Body of pancreas (tissue), 4 donors: ENCODE measurements at regions of chr1 and their contacts with region 1.

Region 1: DNA sequence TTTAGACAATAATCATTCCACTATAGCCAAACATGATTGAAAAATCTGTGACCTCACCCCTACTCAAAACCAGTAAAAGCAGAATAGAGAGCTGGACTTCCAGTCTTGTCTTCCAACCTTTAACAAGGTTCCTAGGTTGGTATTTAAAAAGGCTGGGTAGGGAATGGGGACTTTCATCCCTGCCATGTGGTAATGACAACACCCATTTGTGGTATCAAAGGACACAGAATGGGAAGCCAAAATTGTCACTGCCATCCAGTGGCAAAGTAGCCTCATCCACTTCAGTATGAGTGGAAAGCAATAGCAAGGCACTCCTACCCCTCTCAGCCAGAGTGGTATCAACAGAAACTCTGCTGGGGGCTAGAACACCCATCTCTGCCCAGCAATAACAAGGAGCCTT is 33.9 kb downstream of the UCHL5 start:
- DNase-seq: no peak
- ATAC-seq: no peak
- H3K4me3 ChIP-seq: no peak overlapping the region
- H3K27ac ChIP-seq: no peak overlapping the region
- H3K4me1 ChIP-seq: peaks cover 2% of the 10 kb centered on the region
- H3K27me3 ChIP-seq: no peaks in the 10 kb centered on the region
- CTCF ChIP-seq: no peak
- POLR2A ChIP-seq: no peak

Region 2: DNA sequence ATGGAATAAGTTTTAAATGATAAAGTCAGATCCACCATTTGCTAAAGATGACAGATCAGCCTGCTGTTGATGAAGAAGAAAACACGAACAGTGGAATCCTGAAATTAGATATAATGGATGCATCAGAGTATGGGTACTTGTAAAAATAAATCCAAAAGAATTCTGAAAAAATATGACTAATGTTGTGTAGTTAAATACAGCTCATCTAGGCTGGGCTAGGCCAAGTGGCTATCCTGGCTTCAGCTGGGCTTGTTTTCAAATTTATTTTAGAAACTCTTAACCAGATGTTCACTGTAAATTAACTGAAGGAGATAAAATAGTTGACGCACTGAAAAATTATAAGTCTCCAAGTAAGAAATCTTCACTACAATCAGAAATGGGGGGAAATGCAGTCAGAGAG is 223.8 kb before region 1 on chr1:
- intact Hi-C with region 1: loop called (anchors 5 kb)
- DNase-seq: no peak
- ATAC-seq: no peak
- H3K4me3 ChIP-seq: no peak overlapping the region
- H3K27ac ChIP-seq: no peak overlapping the region
- H3K4me1 ChIP-seq: no peaks in the 10 kb centered on the region
- H3K27me3 ChIP-seq: no peaks in the 10 kb centered on the region
- CTCF ChIP-seq: no peak
- POLR2A ChIP-seq: no peak